ENCODE measurements at regions of chr1 and their contacts with region 1.

Region 1: DNA sequence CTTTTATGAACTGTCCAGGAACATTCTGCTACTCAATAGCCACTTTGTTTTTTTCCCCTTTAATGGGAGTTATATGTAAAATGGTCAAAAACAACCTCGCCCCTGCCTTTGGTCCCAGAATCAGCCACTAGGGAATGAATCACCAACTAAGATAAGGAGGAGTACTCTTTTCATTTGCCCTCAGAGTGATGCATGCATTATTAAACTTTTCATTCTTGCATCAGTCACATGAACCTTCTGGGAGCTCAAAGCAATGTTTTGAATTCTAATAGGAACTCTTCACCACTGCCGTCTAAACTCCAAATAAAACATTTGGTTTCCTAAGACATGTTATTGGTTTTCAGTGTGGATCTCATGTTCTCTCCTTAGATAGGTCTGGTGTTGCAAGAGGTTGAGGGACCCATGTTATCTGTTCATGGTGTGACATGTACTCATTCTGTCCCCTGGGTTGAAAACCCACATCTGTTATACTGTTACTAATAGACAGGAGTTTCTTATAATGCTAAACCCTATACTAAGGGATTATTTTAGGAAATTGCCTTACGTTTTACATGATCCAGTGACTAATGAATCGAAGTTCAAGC is 17.8 kb upstream of the HSD17B7 start:
- DNase-seq: no peak
- H3K4me3 ChIP-seq: no peak overlapping the region
- H3K27me3 ChIP-seq: no peaks in the 10 kb centered on the region
- CTCF ChIP-seq: no peak

Region 2: GRCh38 chr1:162497723-162498500 is 274.8 kb before region 1 on chr1 and contains the start of gene UHMK1:
- CTCF ChIA-PET with region 1: no interaction called
- POLR2A ChIA-PET with region 1: no interaction called
- DNase-seq: peak; percentile 43
- H3K4me3 ChIP-seq: peak within 1 kb of the TSS; percentile 93
- H3K27me3 ChIP-seq: no peaks in the 10 kb centered on the region
- CTCF ChIP-seq: no peak
- polyA plus RNA-seq, gene UHMK1: 16.9 and 37.5 TPM in 2 replicates

Region 3: DNA sequence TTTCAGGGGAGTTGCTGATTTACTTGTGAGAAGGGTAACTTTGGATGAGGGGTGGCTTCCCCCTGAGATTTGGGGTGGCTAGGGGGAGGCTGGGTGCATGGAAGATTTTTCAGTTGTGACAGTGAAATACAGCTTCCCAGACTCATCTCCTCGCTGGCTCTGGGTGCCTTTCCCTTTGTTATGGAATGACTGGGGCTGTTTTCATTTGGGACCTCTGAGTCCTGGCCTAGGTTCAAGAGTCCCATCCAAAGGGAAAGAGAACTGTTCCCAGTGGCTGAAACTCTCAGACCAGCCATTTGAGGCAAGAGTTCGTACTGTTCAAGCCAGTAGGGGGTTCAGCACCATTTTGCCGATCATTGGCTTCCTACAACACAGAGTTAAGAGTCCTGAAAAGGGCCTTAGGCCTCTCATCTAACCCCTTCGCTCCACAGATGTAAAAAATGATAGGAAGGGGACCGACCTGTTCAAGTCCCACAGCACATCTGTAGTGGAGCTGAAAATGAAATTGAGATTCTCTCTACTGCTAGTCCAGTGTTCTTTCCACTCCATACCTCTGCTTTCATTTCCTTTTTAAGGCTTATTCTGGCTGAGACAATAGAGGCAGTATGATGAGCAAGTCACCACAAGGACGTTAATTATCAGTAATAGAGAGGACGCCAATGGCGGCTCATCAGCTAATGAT is 139.4 kb before region 1 on chr1:
- CTCF ChIA-PET with region 1: no interaction called
- POLR2A ChIA-PET with region 1: interaction called, 10 read pairs
- DNase-seq: no peak
- H3K4me3 ChIP-seq: peak overlapping the region; percentile 69
- H3K27me3 ChIP-seq: no peaks in the 10 kb centered on the region
- CTCF ChIP-seq: peak; percentile 26; the same call in 1 of the 2 replicates

Region 4: GRCh38 chr1:162726555-162726954 is 46.1 kb before region 1 on chr1:
- CTCF ChIA-PET with region 1: no interaction called
- POLR2A ChIA-PET with region 1: no interaction called
- DNase-seq: no peak
- H3K4me3 ChIP-seq: no peak overlapping the region
- H3K27me3 ChIP-seq: no peaks in the 10 kb centered on the region
- CTCF ChIP-seq: no peak

Region 5: GRCh38 chr1:162822391-162823200 is 49.9 kb after region 1 on chr1:
- CTCF ChIA-PET with region 1: no interaction called
- POLR2A ChIA-PET with region 1: no interaction called
- DNase-seq: no peak
- H3K4me3 ChIP-seq: peak overlapping the region; percentile 33
- H3K27me3 ChIP-seq: no peaks in the 10 kb centered on the region
- CTCF ChIP-seq: peak; percentile 4; the same call in 1 of the 2 replicates

Region 6: GRCh38 chr1:163035446-163036249 is 263.0 kb after region 1 on chr1:
- CTCF ChIA-PET with region 1: no interaction called
- POLR2A ChIA-PET with region 1: no interaction called
- DNase-seq: peak; percentile 82
- H3K4me3 ChIP-seq: no peak overlapping the region
- H3K27me3 ChIP-seq: no peaks in the 10 kb centered on the region
- CTCF ChIP-seq: no peak